B cell (primary cell): ENCODE measurements at regions of chr3 and their contacts with region 1.

Region 1: DNA sequence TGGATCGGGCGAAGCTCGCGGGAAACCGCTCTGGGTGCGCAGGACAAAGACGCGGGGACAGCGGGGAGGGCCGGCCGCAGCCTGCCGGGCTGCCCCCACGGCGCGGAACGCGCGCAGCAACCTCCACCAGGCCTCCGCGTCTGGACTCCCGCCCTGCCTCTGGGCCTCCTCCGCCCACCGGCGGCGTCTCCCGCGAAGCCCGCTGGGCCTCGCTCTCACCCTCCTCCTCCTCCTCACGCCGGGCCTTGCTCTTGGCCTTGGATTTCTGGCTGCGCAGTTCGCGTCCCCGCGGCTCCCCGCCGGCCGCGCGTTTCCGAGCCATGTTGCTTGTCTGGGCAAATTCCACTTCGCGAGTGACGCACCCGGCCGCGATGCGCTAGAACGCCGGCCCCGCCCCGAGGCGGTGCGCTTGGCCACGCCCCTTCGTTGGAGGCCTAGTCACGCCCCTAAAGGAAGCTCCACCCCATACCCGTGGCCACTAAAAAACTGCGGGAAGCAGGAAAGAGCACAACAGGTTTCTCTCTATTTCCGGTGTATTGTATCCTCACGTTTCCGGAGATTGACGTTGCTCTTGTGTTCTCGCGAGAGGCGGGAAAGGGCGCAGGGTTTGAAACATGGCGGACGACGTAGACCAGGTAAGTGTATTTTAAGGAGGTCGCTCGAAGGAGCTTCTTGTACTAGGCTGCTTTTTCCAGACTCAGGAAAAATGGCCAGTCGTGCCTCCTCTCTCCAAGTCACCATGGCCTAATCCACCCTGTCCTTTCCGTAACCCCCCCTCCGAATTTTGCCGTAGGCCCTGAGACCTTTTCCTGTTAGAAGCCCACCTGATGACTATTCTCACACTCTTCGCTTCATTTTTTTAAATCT is at the starts of genes LSM3 and XPC:
- DNase-seq: peak; percentile 99
- ATAC-seq: peak; percentile 96
- H3K4me3 ChIP-seq: peak within 1 kb of the TSS; percentile 65 to 97 (median 89)
- H3K4me3 Mint-ChIP-seq: peak within 1 kb of the TSS; percentile 95
- H3K27ac ChIP-seq: peak within 1 kb of the TSS; percentile 85 to 97
- H3K27ac Mint-ChIP-seq: peak within 1 kb of the TSS; percentile 99
- H3K4me1 ChIP-seq: peaks cover 39 to 42% of the 10 kb centered on the region in 2 donors
- H3K4me1 Mint-ChIP-seq: peaks cover 65% of the 10 kb centered on the region
- H3K27me3 ChIP-seq: no peaks in the 10 kb centered on the region
- H3K27me3 Mint-ChIP-seq: no peaks in the 10 kb centered on the region
- CTCF ChIP-seq: no peak
- total RNA-seq, gene LSM3: 9.7 and 10.0 TPM in 2 replicates
- total RNA-seq, gene XPC: 61.5 and 67.6 TPM in 2 replicates

Region 2: DNA sequence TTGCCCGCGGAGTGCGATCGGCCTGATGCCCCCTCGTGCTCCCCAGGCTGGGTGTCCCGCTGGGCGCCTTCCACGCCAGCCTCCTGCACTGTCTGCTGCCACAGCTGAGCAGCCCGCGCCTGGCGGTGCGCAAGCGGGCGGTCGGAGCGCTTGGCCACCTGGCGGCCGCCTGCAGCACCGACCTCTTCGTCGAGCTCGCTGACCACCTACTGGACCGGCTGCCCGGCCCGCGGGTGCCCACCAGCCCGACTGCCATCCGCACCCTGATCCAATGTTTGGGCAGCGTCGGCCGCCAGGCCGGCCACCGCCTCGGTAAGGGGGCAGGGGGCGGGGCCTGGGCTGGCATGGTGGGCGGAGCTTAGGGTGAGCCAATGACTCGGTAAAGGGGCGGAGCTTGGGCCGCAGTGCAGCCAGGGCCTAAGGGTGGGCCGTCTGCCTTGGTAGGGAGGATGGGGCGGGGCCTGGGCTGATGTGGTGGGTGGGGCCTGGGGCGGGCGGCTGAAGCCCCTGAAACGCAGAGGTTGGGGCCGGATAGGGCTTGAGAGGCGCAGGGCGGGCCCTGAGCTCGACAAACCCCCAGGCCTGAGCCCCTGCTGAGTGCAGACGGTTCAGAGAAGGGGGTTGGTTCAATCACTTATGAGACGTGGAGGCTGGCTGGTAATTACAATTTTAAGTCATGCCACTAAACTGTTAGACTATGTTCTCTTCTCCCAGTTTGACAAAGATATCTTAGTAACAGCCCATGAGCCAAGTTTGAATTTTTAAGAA is 1368.3 kb before region 1 on chr3:
- CTCF ChIA-PET with region 1: no interaction called
- POLR2A ChIA-PET with region 1: no interaction called
- intact Hi-C with region 1: loop called (anchors 5 kb)
- DNase-seq: peak; percentile 96
- ATAC-seq: peak; percentile 100
- H3K4me3 ChIP-seq: peak overlapping the region in 4 of 5 experiments; percentile 45 to 69 (median 61)
- H3K4me3 Mint-ChIP-seq: peak overlapping the region; percentile 81
- H3K27ac ChIP-seq: no peak overlapping the region
- H3K27ac Mint-ChIP-seq: peak overlapping the region; percentile 32
- H3K4me1 ChIP-seq: peaks cover 7 to 14% of the 10 kb centered on the region in 2 donors
- H3K4me1 Mint-ChIP-seq: peaks cover 8% of the 10 kb centered on the region
- H3K27me3 ChIP-seq: no peaks in the 10 kb centered on the region
- H3K27me3 Mint-ChIP-seq: no peaks in the 10 kb centered on the region
- CTCF ChIP-seq: peak; percentile 92

Region 3: DNA sequence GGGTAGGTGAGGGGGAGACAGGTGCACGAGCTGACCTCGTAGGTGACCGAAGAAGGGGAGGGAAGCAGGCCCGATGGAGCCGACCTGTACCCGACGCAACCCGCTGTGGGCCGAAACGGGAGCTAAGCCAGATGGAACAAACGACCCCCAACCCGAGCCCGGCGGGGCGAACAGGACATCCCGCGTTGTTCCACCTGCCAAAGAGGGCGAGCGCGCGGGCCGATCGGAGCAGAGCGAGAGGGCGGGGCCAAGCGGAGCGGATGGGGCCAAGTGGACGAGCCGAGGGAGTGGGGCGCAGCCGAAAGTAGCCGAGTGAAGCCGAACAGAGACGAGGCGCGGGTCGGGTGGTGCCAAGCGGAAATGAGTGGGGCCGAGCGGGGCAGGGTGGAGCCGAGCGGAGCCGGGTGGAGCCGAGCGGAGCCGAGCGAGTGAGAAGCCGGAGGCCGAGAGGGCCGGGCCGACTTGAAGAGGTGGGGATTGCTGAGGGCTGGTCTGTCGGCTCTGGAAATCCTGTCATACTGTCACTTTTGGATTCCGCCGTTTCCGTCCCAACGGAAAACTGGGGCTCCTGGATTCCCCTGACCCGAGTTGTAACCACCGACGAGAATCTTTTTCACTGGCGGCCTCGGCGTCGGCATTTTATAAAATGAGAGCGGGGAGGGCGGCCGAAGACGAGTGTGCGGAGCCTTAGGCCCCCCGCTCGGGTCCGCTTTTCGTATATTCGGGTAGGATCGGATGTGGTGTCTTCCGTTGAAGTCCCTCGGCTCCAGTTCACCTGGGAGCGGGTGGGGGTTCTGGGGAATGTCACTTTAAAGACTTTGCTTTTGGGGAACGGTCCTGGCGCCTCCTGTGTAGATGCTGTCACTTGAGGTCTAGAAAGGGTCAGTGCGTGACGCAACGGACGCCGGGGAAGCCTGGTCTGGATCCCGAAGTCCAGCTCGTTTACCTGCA is 283.1 kb before region 1 on chr3:
- CTCF ChIA-PET with region 1: interaction called, 7 read pairs
- POLR2A ChIA-PET with region 1: no interaction called
- intact Hi-C with region 1: loop called (anchors 1 kb)
- DNase-seq: peak; percentile 92
- ATAC-seq: peak; percentile 98
- H3K4me3 ChIP-seq: peak overlapping the region; percentile 32 to 75 (median 64)
- H3K4me3 Mint-ChIP-seq: peak overlapping the region; percentile 89
- H3K27ac ChIP-seq: peak overlapping the region in 1 of 2 donors; percentile 58
- H3K27ac Mint-ChIP-seq: peak overlapping the region; percentile 69
- H3K4me1 ChIP-seq: peaks cover 17 to 33% of the 10 kb centered on the region in 2 donors
- H3K4me1 Mint-ChIP-seq: peaks cover 30% of the 10 kb centered on the region
- H3K27me3 ChIP-seq: peaks cover 0 to 7% (median 0%) of the 10 kb centered on the region in 4 experiments
- H3K27me3 Mint-ChIP-seq: peaks cover 20% of the 10 kb centered on the region
- CTCF ChIP-seq: no peak

Region 4: GRCh38 chr3:14144423-14145075 is 33.9 kb before region 1 on chr3:
- CTCF ChIA-PET with region 1: interaction called, 3 read pairs
- POLR2A ChIA-PET with region 1: interaction called, 7 read pairs
- intact Hi-C with region 1: loop called (anchors 1 kb)
- DNase-seq: peak; percentile 88
- ATAC-seq: peak; percentile 88
- H3K4me3 ChIP-seq: peak overlapping the region in 1 of 5 experiments; percentile 73
- H3K4me3 Mint-ChIP-seq: peak overlapping the region; percentile 65
- H3K27ac ChIP-seq: peak overlapping the region; percentile 81 to 95
- H3K27ac Mint-ChIP-seq: peak overlapping the region; percentile 96
- H3K4me1 ChIP-seq: peaks cover 18 to 21% of the 10 kb centered on the region in 2 donors
- H3K4me1 Mint-ChIP-seq: peaks cover 17% of the 10 kb centered on the region
- H3K27me3 ChIP-seq: no peaks in the 10 kb centered on the region
- H3K27me3 Mint-ChIP-seq: no peaks in the 10 kb centered on the region
- CTCF ChIP-seq: no peak

Region 5: GRCh38 chr3:14402304-14402811 is 223.9 kb after region 1 on chr3 and contains the start of gene SLC6A6:
- CTCF ChIA-PET with region 1: no interaction called
- POLR2A ChIA-PET with region 1: no interaction called
- intact Hi-C with region 1: loop called (anchors 1 kb)
- DNase-seq: peak; percentile 97
- ATAC-seq: peak; percentile 80
- H3K4me3 ChIP-seq: peak within 1 kb of the TSS; percentile 53 to 87 (median 85)
- H3K4me3 Mint-ChIP-seq: peak within 1 kb of the TSS; percentile 99
- H3K27ac ChIP-seq: peak within 1 kb of the TSS; percentile 81 to 89
- H3K27ac Mint-ChIP-seq: peak within 1 kb of the TSS; percentile 98
- H3K4me1 ChIP-seq: peaks cover 39 to 55% of the 10 kb centered on the region in 2 donors
- H3K4me1 Mint-ChIP-seq: peaks cover 60% of the 10 kb centered on the region
- H3K27me3 ChIP-seq: no peaks in the 10 kb centered on the region
- H3K27me3 Mint-ChIP-seq: no peaks in the 10 kb centered on the region
- CTCF ChIP-seq: peak; percentile 67
- total RNA-seq, gene SLC6A6: 48.7 and 50.1 TPM in 2 replicates

Region 6: DNA sequence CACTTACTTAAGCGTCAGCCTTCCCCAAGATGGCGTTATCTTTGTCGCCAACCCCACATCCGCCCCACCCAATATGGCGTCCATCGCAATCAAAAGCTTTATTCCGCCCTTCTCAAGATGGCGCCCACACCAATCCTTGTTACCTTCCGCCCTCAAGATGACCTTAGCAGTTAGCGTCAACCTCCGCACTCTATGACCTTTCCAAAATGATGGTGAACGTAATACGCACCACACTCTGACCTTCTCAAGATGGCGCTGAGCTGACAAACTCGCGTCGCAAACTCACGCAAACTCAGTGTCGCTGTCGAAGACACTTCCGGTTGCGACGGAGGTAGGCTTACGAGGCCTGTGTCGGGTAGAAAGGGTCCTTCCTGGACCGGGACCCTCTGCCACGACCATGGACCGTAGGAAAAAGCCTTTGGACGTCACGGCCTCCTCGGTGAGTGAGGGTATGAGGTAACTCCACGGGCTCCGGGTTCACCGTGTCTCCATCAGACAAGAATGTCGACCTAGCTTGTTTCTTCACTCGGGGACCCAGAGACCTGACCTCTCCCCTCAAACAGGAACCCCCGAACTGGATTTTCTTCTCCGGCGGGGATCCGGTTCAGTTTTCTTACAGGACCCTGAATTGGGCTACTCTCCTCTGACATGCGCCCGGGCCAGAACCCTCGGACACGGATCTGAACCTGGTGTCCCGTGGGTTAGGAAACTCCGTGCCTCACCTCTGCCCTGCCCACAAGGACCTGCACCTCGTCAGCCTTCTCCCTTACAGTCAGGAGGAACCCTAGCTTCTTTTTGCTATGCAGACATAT is 473.2 kb after region 1 on chr3 and contains the start of gene CCDC174:
- CTCF ChIA-PET with region 1: interaction called, 3 read pairs
- POLR2A ChIA-PET with region 1: interaction called, 14 read pairs
- intact Hi-C with region 1: no loop called
- DNase-seq: peak; percentile 100
- ATAC-seq: peak; percentile 98
- H3K4me3 ChIP-seq: peak within 1 kb of the TSS; percentile 79 to 92 (median 88)
- H3K4me3 Mint-ChIP-seq: peak within 1 kb of the TSS; percentile 91
- H3K27ac ChIP-seq: peak within 1 kb of the TSS; percentile 97 to 98
- H3K27ac Mint-ChIP-seq: peak within 1 kb of the TSS; percentile 94
- H3K4me1 ChIP-seq: peaks cover 21 to 28% of the 10 kb centered on the region in 2 donors
- H3K4me1 Mint-ChIP-seq: peaks cover 36% of the 10 kb centered on the region
- H3K27me3 ChIP-seq: no peaks in the 10 kb centered on the region
- H3K27me3 Mint-ChIP-seq: no peaks in the 10 kb centered on the region
- CTCF ChIP-seq: no peak
- total RNA-seq, gene CCDC174: 36.5 and 47.1 TPM in 2 replicates